ENCODE measurements at regions of chr16 and their contacts with region 1.

Region 1: GRCh38 chr16:28553776-28554633 is at the start of gene SGF29:
- DNase-seq: peak; percentile 94
- H3K4me3 ChIP-seq: peak within 1 kb of the TSS in 2 of 3 experiments; percentile 45 to 75
- H3K27ac ChIP-seq: peak within 1 kb of the TSS; percentile 88
- H3K4me1 ChIP-seq: peaks cover 5% of the 10 kb centered on the region
- H3K27me3 ChIP-seq: no peaks in the 10 kb centered on the region
- CTCF ChIP-seq: peak in 1 of 2 donors; percentile 31
- POLR2A ChIP-seq: peak; percentile 96
- total RNA-seq, gene SGF29: 12.0 and 17.6 TPM in 2 replicates

Region 2: GRCh38 chr16:28090646-28091377 is 463.2 kb before region 1 on chr16:
- CTCF ChIA-PET with region 1: no interaction called
- POLR2A ChIA-PET with region 1: no interaction called
- dilution Hi-C with region 1: no loop called
- intact Hi-C with region 1: no loop called
- DNase-seq: no peak
- H3K4me3 ChIP-seq: no peak overlapping the region
- H3K27ac ChIP-seq: no peak overlapping the region
- H3K4me1 ChIP-seq: no peaks in the 10 kb centered on the region
- H3K27me3 ChIP-seq: no peaks in the 10 kb centered on the region
- CTCF ChIP-seq: peak; percentile 16 to 25
- POLR2A ChIP-seq: no peak

Region 3: GRCh38 chr16:28277537-28278388 is 276.2 kb before region 1 on chr16:
- CTCF ChIA-PET with region 1: no interaction called
- POLR2A ChIA-PET with region 1: no interaction called
- dilution Hi-C with region 1: no loop called
- intact Hi-C with region 1: loop called (anchors 2 kb)
- DNase-seq: peak; percentile 74
- H3K4me3 ChIP-seq: peak overlapping the region in 2 of 3 experiments; percentile 18 to 35
- H3K27ac ChIP-seq: no peak overlapping the region
- H3K4me1 ChIP-seq: peaks cover 2% of the 10 kb centered on the region
- H3K27me3 ChIP-seq: peaks cover 0 to 2% of the 10 kb centered on the region in 2 experiments
- CTCF ChIP-seq: peak; percentile 91 to 95
- POLR2A ChIP-seq: no peak

Region 4: GRCh38 chr16:28304214-28304613 is 249.8 kb before region 1 on chr16:
- CTCF ChIA-PET with region 1: no interaction called
- POLR2A ChIA-PET with region 1: no interaction called
- dilution Hi-C with region 1: no loop called
- intact Hi-C with region 1: no loop called
- DNase-seq: peak; percentile 31
- H3K4me3 ChIP-seq: no peak overlapping the region
- H3K27ac ChIP-seq: no peak overlapping the region
- H3K4me1 ChIP-seq: no peaks in the 10 kb centered on the region
- H3K27me3 ChIP-seq: no peaks in the 10 kb centered on the region
- CTCF ChIP-seq: no peak
- POLR2A ChIP-seq: no peak

Region 5: DNA sequence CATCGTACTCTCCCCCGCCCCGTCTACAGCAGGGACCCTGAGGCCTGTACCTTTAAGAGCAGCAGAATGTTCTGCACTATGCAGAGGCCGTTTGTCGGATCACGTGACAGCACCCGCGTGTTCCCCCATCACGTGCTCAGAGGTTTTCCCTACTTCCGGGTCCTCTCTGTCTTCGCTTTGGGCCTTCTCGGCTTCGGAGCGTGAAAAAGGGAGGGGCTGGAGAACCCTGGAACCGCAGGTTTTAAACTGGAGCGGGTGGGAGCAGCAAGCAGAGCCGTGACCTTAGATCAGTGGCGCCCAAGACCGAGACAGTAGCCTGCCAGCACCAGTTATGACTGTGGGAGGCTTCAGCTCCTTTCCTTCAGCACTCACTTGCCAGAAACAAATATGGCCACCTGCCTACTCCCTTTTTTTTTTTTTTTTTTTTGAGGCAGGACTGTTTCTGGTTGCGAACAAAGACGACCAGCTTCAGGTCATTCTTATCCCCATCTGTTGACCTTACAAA is 62.0 kb before region 1 on chr16 and contains the start of gene CLN3:
- CTCF ChIA-PET with region 1: interaction called, 4 read pairs
- POLR2A ChIA-PET with region 1: no interaction called
- dilution Hi-C with region 1: no loop called
- intact Hi-C with region 1: loop called (anchors 1 kb)
- DNase-seq: peak; percentile 94
- H3K4me3 ChIP-seq: peak within 1 kb of the TSS; percentile 73 to 94 (median 81)
- H3K27ac ChIP-seq: peak within 1 kb of the TSS; percentile 90
- H3K4me1 ChIP-seq: peaks cover 2% of the 10 kb centered on the region
- H3K27me3 ChIP-seq: no peaks in the 10 kb centered on the region
- CTCF ChIP-seq: no peak
- POLR2A ChIP-seq: no peak
- total RNA-seq, gene CLN3: 33.1 and 40.2 TPM in 2 replicates

Region 6: DNA sequence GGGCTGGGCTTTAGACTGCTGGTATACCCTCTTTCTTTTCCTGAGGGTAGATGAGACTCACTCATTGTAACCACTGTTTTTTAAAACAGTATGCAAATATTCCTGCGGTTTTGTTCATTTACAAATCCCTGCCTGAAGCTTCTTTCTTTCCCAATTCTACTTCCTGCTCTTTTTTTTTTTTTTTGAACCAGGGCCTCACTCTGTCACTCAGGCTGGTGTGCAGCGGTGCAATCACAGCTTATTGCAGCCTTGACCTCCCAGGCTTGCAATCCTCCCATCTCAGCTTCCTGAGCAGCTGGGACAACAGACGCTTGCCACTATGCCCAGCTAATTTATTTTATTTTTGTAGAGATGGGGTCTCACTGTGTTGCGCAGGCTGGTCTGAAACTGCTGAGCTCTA is 63.9 kb after region 1 on chr16:
- CTCF ChIA-PET with region 1: no interaction called
- POLR2A ChIA-PET with region 1: no interaction called
- dilution Hi-C with region 1: no loop called
- intact Hi-C with region 1: no loop called
- DNase-seq: no peak
- H3K4me3 ChIP-seq: no peak overlapping the region
- H3K27ac ChIP-seq: no peak overlapping the region
- H3K4me1 ChIP-seq: no peaks in the 10 kb centered on the region
- H3K27me3 ChIP-seq: peaks cover 0 to 1% of the 10 kb centered on the region in 2 experiments
- CTCF ChIP-seq: no peak
- POLR2A ChIP-seq: no peak

Measured in endothelial cell of umbilical vein (primary cell).